ENCODE measurements at regions of chr3 and their contacts with region 1.

Region 1: GRCh38 chr3:169966428-169966950 is at the start of gene SEC62:
- DNase-seq: peak; percentile 97
- ATAC-seq: peak; percentile 85
- H3K4me3 Mint-ChIP-seq: peak within 1 kb of the TSS; percentile 83
- H3K27ac Mint-ChIP-seq: peak within 1 kb of the TSS; percentile 95
- H3K4me1 Mint-ChIP-seq: peaks cover 62% of the 10 kb centered on the region
- H3K27me3 Mint-ChIP-seq: no peaks in the 10 kb centered on the region
- total RNA-seq, gene SEC62: 62.8 to 74.7 TPM

Region 2: GRCh38 chr3:169772897-169773828 is 193.3 kb before region 1 on chr3 and contains the start of gene MYNN:
- CTCF ChIA-PET with region 1: no interaction called
- POLR2A ChIA-PET with region 1: interaction called, 3 read pairs
- intact Hi-C with region 1: loop called (anchors 1 to 2 kb)
- DNase-seq: peak; percentile 95
- ATAC-seq: peak; percentile 80
- H3K4me3 Mint-ChIP-seq: peak within 1 kb of the TSS; percentile 99
- H3K27ac Mint-ChIP-seq: peak within 1 kb of the TSS; percentile 100
- H3K4me1 Mint-ChIP-seq: peaks cover 45% of the 10 kb centered on the region
- H3K27me3 Mint-ChIP-seq: no peaks in the 10 kb centered on the region
- total RNA-seq, gene MYNN: 13.6 to 14.2 TPM

Region 3: DNA sequence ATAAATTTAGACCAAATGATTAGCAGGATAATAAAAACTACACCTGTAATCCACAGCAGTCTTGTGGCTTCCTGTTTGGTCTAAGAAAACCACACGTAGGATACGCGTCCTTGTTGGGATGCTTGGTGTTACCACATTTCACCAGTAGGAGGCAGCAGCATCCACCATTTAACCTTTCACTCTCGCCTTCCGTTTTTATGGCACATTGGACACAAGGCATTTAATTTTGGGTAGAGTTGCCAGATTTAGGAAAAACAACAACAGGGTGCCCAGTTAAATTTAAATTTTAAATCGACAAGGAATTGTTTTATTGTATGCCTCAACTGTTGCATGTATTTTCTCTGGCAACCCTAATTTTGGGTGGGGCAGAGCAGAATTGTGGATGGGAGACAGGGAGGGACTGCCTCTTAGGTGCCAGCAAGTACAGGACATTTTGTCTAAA is 103.0 kb before region 1 on chr3:
- CTCF ChIA-PET with region 1: interaction called, 4 read pairs
- POLR2A ChIA-PET with region 1: interaction called, 4 read pairs
- intact Hi-C with region 1: loop called (anchors 1 to 5 kb)
- DNase-seq: peak; percentile 77
- ATAC-seq: peak; percentile 61
- H3K4me3 Mint-ChIP-seq: no peak overlapping the region
- H3K27ac Mint-ChIP-seq: no peak overlapping the region
- H3K4me1 Mint-ChIP-seq: peaks cover 18% of the 10 kb centered on the region
- H3K27me3 Mint-ChIP-seq: peaks cover 4% of the 10 kb centered on the region

Region 4: GRCh38 chr3:170037463-170038433 is 71.3 kb after region 1 on chr3 and contains the start of gene GPR160:
- CTCF ChIA-PET with region 1: interaction called, 3 read pairs
- POLR2A ChIA-PET with region 1: no interaction called
- intact Hi-C with region 1: loop called in 1 of 2 experiments (anchors 2 kb)
- DNase-seq: peak; percentile 92
- ATAC-seq: peak; percentile 92
- H3K4me3 Mint-ChIP-seq: peak within 1 kb of the TSS; percentile 79
- H3K27ac Mint-ChIP-seq: no peak within 1 kb of the TSS
- H3K4me1 Mint-ChIP-seq: peaks cover 19% of the 10 kb centered on the region
- H3K27me3 Mint-ChIP-seq: no peaks in the 10 kb centered on the region
- total RNA-seq, gene GPR160: 9.4 to 11.1 TPM

Region 5: GRCh38 chr3:170869645-170870593 is 903.4 kb after region 1 on chr3 and contains the start of gene RPL22L1:
- CTCF ChIA-PET with region 1: no interaction called
- POLR2A ChIA-PET with region 1: no interaction called
- intact Hi-C with region 1: loop called in 1 of 2 experiments (anchors 10 kb)
- DNase-seq: peak; percentile 96
- ATAC-seq: peak; percentile 95
- H3K4me3 Mint-ChIP-seq: peak within 1 kb of the TSS; percentile 94
- H3K27ac Mint-ChIP-seq: peak within 1 kb of the TSS; percentile 99
- H3K4me1 Mint-ChIP-seq: peaks cover 15% of the 10 kb centered on the region
- H3K27me3 Mint-ChIP-seq: no peaks in the 10 kb centered on the region
- total RNA-seq, gene RPL22L1: 186 to 441 TPM